ENCODE measurements at regions of chr7 and their contacts with region 1.

Region 1: DNA sequence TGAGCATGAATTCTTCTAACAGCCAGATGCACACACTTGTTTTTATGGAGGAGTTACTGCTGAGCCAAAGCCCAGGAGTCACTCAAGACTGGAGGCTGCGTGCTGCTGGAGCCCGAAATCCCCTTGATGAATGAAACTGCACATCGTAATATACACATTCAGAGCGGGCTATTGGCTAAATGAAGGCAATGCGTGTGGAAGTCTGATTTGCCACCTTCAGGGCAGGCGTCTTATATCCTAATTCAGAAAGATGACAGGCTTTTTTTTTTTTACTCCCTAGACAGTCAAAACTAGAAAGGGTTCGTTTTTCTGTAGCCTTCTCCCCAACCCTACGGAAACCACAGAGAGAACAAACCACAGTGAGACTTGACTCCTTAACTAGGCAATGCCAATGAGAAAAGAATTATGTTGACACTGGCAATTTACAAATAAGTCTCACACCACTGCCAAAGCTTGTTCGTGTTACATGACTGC is 227.2 kb upstream of the KLF14 start:
- DNase-seq: peak; percentile 90
- H3K4me3 Mint-ChIP-seq: peak overlapping the region; percentile 92
- H3K27ac Mint-ChIP-seq: peak overlapping the region; percentile 98
- H3K4me1 Mint-ChIP-seq: peaks cover 52% of the 10 kb centered on the region
- H3K27me3 Mint-ChIP-seq: no peaks in the 10 kb centered on the region

Region 2: GRCh38 chr7:130912862-130913631 is 48.1 kb before region 1 on chr7:
- CTCF ChIA-PET with region 1: interaction called, 15 read pairs
- POLR2A ChIA-PET with region 1: interaction called, 4 read pairs
- DNase-seq: peak; percentile 88
- H3K4me3 Mint-ChIP-seq: peak overlapping the region; percentile 82
- H3K27ac Mint-ChIP-seq: peak overlapping the region; percentile 94
- H3K4me1 Mint-ChIP-seq: peaks cover 85% of the 10 kb centered on the region
- H3K27me3 Mint-ChIP-seq: no peaks in the 10 kb centered on the region

Region 3: DNA sequence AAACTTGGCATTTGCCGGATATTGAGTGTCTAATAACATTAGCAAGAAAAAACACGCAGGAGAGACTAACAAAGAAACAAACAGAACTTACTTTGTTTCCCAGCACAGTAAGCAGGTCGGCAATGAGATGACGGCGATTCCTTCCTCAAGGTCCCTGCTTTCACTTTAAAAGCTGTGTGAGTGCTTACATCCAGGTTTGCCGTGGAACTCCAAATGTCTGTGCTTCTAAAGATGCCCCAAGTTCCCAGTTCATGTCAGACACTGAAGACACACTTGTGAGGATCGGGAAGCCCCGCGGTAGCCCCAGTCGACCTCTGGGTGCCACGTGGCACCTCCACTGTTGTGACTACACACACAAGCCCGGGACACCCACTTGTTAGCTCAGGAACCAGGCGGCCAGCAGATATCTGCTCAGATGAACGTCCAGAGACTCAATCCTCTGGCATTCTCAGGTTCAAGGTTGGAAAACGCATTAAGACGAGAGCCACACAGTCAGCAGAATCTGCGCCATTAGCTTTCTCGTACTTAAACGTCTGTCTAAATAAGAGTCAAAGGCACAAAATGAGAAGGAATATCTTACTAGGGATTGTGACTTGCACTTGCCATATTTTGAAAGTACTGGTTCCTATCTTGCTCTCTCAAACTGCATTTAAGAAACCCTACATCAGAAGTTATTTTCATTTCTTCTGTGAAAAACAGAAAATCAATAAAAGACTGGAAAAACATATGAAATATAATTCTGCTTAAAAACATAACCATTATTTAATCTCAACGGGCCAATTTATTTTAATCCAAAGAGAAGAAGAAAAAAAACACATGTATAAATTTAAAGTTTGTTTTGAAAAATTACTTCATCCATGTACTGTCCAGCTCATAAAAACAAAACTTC is 19.6 kb before region 1 on chr7:
- CTCF ChIA-PET with region 1: interaction called, 20 read pairs
- POLR2A ChIA-PET with region 1: interaction called, 5 read pairs
- DNase-seq: no peak
- H3K4me3 Mint-ChIP-seq: peak overlapping the region; percentile 62
- H3K27ac Mint-ChIP-seq: peak overlapping the region; percentile 79
- H3K4me1 Mint-ChIP-seq: peaks cover 86% of the 10 kb centered on the region
- H3K27me3 Mint-ChIP-seq: no peaks in the 10 kb centered on the region

Region 4: GRCh38 chr7:130982160-130982638 is 21.0 kb after region 1 on chr7:
- CTCF ChIA-PET with region 1: interaction called, 21 read pairs
- POLR2A ChIA-PET with region 1: interaction called, 4 read pairs
- DNase-seq: peak; percentile 46
- H3K4me3 Mint-ChIP-seq: no peak overlapping the region
- H3K27ac Mint-ChIP-seq: no peak overlapping the region
- H3K4me1 Mint-ChIP-seq: peaks cover 33% of the 10 kb centered on the region
- H3K27me3 Mint-ChIP-seq: no peaks in the 10 kb centered on the region

Region 5: DNA sequence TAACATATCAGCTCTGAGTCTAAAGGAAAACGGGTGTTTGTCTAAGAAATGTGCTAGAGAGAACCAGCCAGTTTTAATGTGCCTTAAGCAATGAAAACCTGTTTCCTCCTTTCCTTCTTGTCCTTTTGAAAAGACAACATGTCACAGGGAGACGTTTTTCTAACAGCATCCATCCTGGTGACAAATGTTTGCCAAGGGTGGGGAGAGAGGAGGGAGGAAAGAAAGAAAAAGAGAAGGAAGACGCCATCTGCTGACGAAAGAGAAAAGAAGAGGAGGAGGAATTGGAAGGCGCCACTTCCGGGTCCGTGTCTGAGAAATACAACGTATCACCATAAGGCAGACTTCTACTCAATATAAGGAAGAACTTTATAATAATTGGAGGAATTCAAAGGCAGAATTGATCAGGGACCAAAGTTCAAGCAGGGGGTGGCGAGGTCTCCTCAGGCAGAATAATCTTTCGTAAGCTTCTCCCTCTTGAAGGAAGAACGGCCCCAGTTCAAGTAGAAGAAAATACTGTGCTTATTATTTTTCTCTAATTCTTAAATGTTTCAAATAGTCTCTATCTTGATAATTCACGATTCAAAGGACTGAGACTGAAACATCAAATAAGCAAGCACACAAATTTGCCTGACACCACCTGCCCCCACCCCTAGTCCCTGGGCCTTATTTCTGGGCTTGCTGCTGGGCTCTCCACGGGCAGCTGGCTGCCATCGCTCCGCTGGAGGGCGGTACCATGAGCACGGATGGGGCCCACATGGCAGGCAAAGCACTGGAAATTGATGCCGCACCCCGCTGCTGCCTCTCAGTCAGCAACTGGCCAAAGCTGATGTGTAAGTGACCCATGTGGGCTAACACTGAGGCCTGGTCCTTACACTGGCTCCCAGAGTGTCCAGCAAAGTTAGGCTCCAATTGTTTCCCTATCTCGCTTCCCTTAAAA is 46.5 kb after region 1 on chr7:
- CTCF ChIA-PET with region 1: interaction called, 8 read pairs
- POLR2A ChIA-PET with region 1: interaction called, 15 read pairs
- DNase-seq: peak; percentile 79
- H3K4me3 Mint-ChIP-seq: peak overlapping the region; percentile 58
- H3K27ac Mint-ChIP-seq: peak overlapping the region; percentile 96
- H3K4me1 Mint-ChIP-seq: peaks cover 72% of the 10 kb centered on the region
- H3K27me3 Mint-ChIP-seq: no peaks in the 10 kb centered on the region

Measured in activated CD4-positive, alpha-beta T cell treated with anti-CD3 and anti-CD28 coated beads, Interleukin-2, amount 10 ng/mL, durations not matched to agents 7 days and 5 days (primary cell).